ENCODE measurements at regions of chr17 and their contacts with region 1.

Region 1: DNA sequence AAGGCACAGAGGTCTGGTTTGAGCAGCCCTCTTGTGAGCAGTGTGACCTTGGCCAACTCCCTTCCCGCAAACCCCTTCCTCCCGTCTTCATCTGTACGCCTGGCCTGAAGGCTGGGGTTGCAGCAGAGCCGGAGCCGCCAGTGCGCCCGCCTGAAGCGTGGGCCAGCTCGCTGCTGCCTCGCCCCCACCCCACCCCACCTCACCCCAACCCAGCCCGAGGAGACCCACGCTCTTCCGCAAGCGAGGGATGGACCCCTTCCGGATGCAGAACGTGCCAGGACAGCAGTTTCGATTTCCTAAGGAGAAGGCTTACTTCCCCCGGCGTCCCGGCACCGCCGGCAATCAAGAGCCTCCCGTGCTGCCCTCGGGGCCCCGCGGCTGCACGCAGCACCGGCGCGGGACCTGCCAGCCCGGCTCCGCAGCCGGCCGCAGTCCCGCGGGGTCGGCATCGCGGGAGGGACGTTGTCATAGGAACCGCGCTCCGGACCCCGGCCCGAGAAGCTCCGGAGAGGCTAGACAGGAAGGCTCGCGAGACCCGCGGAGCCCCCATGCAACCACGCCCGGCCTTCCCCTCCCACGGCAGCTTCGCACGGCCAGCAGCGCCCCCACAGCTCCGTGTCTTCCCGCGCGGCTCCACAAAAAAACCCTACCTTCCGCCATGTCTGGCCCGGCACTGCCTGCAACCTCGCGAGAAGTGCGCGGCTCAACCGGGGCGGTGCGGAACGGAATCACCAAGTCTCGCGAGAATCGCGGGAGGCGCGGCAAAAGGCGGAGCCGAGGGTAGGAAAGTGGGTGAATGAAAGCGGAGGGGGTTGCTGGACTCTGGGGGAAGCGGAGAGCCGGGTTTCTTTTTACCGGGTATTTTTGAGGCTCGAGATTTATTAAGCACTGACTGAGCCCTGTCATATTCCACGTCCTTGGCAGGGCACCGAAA is at the start of gene ANKFY1:
- DNase-seq: peak; percentile 99
- CTCF ChIP-seq: peak; percentile 15

Region 2: GRCh38 chr17:4087906-4088693 is 175.4 kb before region 1 on chr17:
- CTCF ChIA-PET with region 1: no interaction called
- POLR2A ChIA-PET with region 1: no interaction called
- DNase-seq: no peak
- CTCF ChIP-seq: no peak

Region 3: GRCh38 chr17:4249452-4250029 is 14.0 kb before region 1 on chr17:
- CTCF ChIA-PET with region 1: interaction called, 72 read pairs
- POLR2A ChIA-PET with region 1: interaction called, 4 read pairs
- DNase-seq: peak; percentile 59
- CTCF ChIP-seq: peak; percentile 48

Region 4: DNA sequence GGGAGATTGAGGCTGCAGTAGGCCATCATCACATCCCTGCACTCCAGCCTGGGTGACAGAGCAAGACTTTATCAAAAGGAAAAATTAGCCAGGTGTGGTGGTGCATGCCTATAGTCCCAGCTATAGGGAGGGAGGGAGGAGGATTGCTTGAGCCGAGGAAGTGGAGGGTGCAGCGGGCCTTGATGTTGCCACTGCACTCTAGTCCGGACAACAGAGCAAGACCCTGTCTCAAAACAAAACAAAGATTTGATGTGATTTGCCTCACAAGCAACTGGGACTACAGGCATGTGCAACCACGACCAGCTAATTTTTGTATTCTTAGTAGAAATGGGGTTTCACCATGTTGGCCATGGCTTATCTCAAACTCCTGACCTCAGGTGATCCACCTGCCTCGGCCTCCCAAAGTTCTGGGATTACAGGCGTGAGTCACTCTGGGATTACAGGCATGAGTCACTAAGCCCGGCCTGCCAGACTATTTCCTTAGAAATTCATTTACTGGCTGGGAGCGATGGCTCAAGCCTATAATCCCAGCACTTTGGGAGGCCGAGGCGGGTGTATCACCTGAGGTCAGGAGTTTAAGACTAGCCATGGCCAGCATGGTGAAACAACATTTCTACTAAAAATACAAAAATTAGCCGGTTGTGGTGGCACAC is 91.4 kb after region 1 on chr17:
- CTCF ChIA-PET with region 1: no interaction called
- POLR2A ChIA-PET with region 1: interaction called, 16 read pairs
- DNase-seq: no peak
- CTCF ChIP-seq: no peak

Region 5: DNA sequence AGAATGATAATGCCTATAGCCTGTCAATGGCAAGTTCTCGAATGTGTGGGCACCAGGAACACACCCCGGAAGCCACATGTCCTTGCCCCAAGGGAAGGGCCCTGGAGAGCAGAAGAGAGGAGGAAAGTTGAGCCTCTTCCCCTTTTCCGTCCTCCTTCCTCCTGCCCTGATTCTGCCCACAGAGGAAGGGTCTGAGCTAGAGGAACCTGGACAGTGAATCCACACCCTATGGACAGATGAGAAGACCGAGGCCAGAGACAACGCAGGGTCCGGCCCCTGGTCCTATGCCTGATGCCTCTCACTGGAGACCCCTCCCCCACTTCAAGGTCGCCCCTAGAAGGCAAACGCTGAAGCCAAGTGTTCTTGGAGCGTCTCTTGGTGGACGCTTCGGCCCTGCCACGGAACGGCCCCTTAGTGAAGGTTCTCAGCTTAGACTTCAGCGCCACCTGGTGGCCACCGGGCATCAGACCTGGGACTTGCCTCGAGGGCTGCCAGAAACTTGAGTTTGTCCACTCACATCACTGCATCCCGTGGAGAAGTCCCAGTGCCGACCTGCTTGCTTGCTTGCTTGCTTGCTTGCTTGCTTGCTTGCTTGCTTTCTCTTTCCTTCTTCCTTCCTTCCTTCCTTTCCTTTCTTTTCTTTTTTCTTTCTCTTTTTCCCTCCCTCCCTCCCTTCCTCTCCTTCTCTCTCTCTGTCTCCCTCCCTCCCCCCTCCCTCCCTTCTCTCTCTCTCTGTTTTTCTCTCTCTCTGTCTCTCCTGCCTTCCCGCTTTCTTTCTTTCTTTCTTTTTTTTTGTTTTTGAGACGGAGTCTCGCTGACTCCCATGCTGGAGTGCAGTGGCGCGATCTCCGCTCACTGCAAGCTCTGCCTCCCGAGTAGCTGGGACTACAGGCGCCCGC is 149.6 kb after region 1 on chr17:
- CTCF ChIA-PET with region 1: interaction called, 12 read pairs
- POLR2A ChIA-PET with region 1: no interaction called
- DNase-seq: peak; percentile 89
- CTCF ChIP-seq: peak; percentile 99

Region 6: DNA sequence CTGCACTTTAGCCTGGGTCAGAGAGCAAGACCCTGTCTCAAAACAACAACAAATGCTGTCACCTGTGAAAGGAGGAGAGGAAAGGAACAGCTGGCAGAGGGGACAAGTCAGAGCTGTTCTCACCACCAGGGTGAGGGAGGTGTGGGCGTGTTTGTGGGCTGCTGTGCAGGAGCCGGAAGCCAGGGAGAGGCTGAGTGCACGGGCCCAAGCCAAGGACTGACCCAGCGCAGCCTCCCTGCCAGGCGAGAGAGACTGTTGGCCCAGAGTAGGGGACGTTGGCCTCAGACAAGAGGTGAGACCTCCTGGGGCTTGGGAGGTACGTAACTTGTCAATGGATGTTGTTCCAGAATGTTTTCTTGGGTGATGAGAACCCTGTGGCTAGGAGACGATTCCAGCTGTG is 245.9 kb after region 1 on chr17:
- CTCF ChIA-PET with region 1: no interaction called
- POLR2A ChIA-PET with region 1: no interaction called
- DNase-seq: peak; percentile 65
- CTCF ChIP-seq: no peak

Measured in GM10248 (cell line).